Transverse colon (tissue), 4 donors: ENCODE measurements at regions of chr6 and their contacts with region 1.

Region 1: GRCh38 chr6:32637219-32637880 is at the start of gene HLA-DQA1:
- DNase-seq: no peak
- H3K4me3 ChIP-seq: no peak within 1 kb of the TSS
- H3K27ac ChIP-seq: no peak within 1 kb of the TSS
- H3K4me1 ChIP-seq: no peaks in the 10 kb centered on the region
- H3K27me3 ChIP-seq: no peaks in the 10 kb centered on the region
- CTCF ChIP-seq: no peak
- EP300 ChIP-seq: no peak
- POLR2A ChIP-seq: peak; percentile 38
- total RNA-seq, gene HLA-DQA1: 0.41 to 4.5 (median 3.2) TPM in 3 of 4 donors, not detected in the other

Region 2: DNA sequence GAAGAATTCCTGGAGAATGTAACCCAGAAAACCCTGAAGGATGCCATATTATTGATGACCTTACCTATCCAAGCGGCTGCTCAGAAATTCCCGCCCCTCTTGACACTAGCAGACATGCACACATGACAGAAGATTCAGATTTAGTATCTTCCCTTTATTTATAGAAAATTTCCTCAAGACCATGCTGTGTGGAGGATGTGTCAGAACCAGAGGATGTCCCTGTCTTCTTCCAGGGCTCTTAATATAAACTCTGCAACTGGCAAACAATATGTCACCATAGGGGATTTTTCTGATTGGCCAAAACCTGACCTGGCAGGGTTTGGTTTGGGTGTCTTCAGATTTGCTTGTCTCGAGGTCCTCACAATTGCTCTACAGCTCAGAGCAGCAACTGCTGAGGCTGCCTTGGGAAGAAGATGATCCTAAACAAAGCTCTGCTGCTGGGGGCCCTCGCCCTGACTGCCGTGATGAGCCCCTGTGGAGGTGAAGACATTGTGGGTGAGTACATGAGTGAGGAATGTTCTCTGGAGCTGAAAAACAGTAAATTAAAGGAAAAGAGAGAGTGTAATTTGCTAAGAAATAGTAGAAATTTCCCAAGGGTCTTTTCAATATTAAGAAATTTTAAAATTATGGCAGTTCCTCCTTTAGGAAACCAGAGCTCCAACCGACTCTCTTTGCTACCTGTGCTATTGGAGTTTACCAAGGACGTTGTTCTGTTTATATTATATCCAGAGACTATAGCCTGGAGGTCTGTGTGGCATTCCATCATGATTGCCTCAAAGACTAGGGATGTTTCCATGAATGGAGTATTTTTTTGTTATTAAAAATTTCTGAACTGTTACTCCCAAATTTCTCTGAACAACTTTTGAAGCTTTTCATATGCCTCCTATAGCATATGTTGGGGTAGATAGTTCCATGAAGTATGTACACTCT is 103.9 kb after region 1 on chr6 and contains the start of gene HLA-DQA2:
- in situ Hi-C with region 1: loop called in 2 of 4 experiments (anchors 5 kb)
- intact Hi-C with region 1: no loop called
- DNase-seq: no peak
- H3K4me3 ChIP-seq: no peak within 1 kb of the TSS
- H3K27ac ChIP-seq: no peak within 1 kb of the TSS
- H3K4me1 ChIP-seq: no peaks in the 10 kb centered on the region
- H3K27me3 ChIP-seq: peaks cover 18% of the 10 kb centered on the region
- CTCF ChIP-seq: no peak
- EP300 ChIP-seq: no peak
- POLR2A ChIP-seq: no peak
- total RNA-seq, gene HLA-DQA2: 2.7 TPM in 1 of 4 donors, not detected in the others